ENCODE measurements at regions of chr12 and their contacts with region 1.

Region 1: GRCh38 chr12:51083126-51083833 is at the start of gene CSRNP2:
- DNase-seq: peak; percentile 94 to 96 (median 95)
- H3K4me3 ChIP-seq: peak within 1 kb of the TSS; percentile 67 to 93
- H3K4me3 Mint-ChIP-seq: peak within 1 kb of the TSS; percentile 93 to 98 (median 96)
- H3K27ac ChIP-seq: peak within 1 kb of the TSS; percentile 86
- H3K27ac Mint-ChIP-seq: peak within 1 kb of the TSS; percentile 88 to 97 (median 95)
- H3K4me1 ChIP-seq: peaks cover 21% of the 10 kb centered on the region
- H3K4me1 Mint-ChIP-seq: peaks cover 28 to 45% (median 36%) of the 10 kb centered on the region in 4 donors
- H3K27me3 ChIP-seq: no peaks in the 10 kb centered on the region
- H3K27me3 Mint-ChIP-seq: no peaks in the 10 kb centered on the region
- total RNA-seq, gene CSRNP2: 34.1 to 35.0 TPM

Region 2: GRCh38 chr12:51172515-51173431 is 89.5 kb after region 1 on chr12 and contains the start of gene TFCP2:
- CTCF ChIA-PET with region 1: no interaction called
- POLR2A ChIA-PET with region 1: interaction called, 8 read pairs
- intact Hi-C with region 1: loop called (anchors 1 kb)
- DNase-seq: peak; percentile 91 to 96 (median 92)
- H3K4me3 ChIP-seq: peak within 1 kb of the TSS; percentile 72 to 87
- H3K4me3 Mint-ChIP-seq: peak within 1 kb of the TSS in 7 of 8 donors; percentile 71 to 92 (median 85)
- H3K27ac ChIP-seq: peak within 1 kb of the TSS; percentile 96
- H3K27ac Mint-ChIP-seq: peak within 1 kb of the TSS in 6 of 7 donors; percentile 78 to 96 (median 91)
- H3K4me1 ChIP-seq: peaks cover 26% of the 10 kb centered on the region
- H3K4me1 Mint-ChIP-seq: peaks cover 10 to 22% (median 11%) of the 10 kb centered on the region in 4 donors
- H3K27me3 ChIP-seq: no peaks in the 10 kb centered on the region
- H3K27me3 Mint-ChIP-seq: no peaks in the 10 kb centered on the region
- total RNA-seq, gene TFCP2: 36.4 to 40.0 TPM